Aorta (tissue), 5 donors: ENCODE measurements at regions of chrX and their contacts with region 1.

Region 1: GRCh38 chrX:136268051-136269048 is 17.1 kb upstream of the MAP7D3 start:
- DNase-seq: no peak
- ATAC-seq: peak; percentile 68
- H3K4me3 ChIP-seq: no peak overlapping the region
- H3K27ac ChIP-seq: no peak overlapping the region
- H3K4me1 ChIP-seq: no peaks in the 10 kb centered on the region
- H3K27me3 ChIP-seq: no peaks in the 10 kb centered on the region

Region 2: DNA sequence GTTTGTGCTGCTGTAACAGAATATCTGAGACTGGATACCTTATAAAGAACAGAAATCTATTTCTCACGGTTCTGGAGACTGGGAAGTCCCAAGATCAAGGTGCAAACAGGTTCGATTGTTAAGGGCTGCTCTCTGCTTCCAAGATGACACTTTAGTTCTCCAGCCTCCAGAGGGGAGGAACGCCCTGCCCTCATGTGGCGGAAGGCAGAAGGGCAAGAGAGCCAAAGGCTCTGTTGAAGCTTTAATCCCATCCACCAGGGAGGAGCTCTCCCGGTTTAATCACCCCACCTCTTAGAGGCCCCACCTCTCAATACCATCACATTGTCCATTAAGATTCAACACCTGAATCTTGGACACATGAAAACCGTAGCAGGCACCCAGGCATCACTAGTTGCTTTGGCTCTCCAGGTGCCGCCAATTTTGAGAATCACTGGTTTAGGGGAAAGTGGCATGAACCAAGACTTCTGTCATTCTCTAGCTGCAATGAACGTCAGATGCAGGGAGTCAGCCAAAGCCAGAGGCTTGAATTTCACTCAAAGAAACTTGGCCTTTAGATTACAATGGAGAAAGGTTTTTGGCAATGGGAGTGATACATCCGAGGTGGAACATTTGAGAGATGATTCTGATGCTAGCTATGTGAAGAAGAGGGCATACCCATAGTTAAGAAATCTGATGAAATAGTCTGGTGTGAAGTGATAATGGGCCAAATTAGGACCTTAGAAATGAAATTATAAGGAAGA is 105.3 kb before region 1 on chrX:
- intact Hi-C with region 1: loop called in 1 of 2 experiments (anchors 10 kb)
- DNase-seq: peak; percentile 65 to 82
- ATAC-seq: peak; percentile 64
- H3K4me3 ChIP-seq: no peak overlapping the region
- H3K27ac ChIP-seq: peak overlapping the region; percentile 61 to 79
- H3K4me1 ChIP-seq: peaks cover 3 to 4% of the 10 kb centered on the region in 2 donors
- H3K27me3 ChIP-seq: no peaks in the 10 kb centered on the region

Region 3: GRCh38 chrX:136214551-136214950 is 53.8 kb before region 1 on chrX:
- intact Hi-C with region 1: loop called in 1 of 2 experiments (anchors 10 kb)
- DNase-seq: no peak
- ATAC-seq: no peak
- H3K4me3 ChIP-seq: no peak overlapping the region
- H3K27ac ChIP-seq: peak overlapping the region in 1 of 2 donors; percentile 74
- H3K4me1 ChIP-seq: no peaks in the 10 kb centered on the region
- H3K27me3 ChIP-seq: no peaks in the 10 kb centered on the region

Region 4: GRCh38 chrX:136496770-136497598 is 228.6 kb after region 1 on chrX and contains the start of gene HTATSF1:
- intact Hi-C with region 1: loop called in 1 of 2 experiments (anchors 5 kb)
- DNase-seq: peak; percentile 91 to 92
- ATAC-seq: peak; percentile 94
- H3K4me3 ChIP-seq: peak within 1 kb of the TSS; percentile 72 to 74
- H3K27ac ChIP-seq: peak within 1 kb of the TSS in 1 of 2 donors; percentile 71
- H3K4me1 ChIP-seq: no peaks in the 10 kb centered on the region
- H3K27me3 ChIP-seq: no peaks in the 10 kb centered on the region
- total RNA-seq, gene HTATSF1: 28.0 to 28.1 TPM